Right ventricle myocardium inferior (tissue), 1 donor: ENCODE measurements at regions of chr3 and their contacts with region 1.

Region 1: GRCh38 chr3:49802719-49803464 is at the start of gene INKA1:
- DNase-seq: peak; percentile 95
- ATAC-seq: peak; percentile 84
- total RNA-seq, gene INKA1: 3.1 TPM

Region 2: GRCh38 chr3:49839193-49839809 is 36.4 kb after region 1 on chr3:
- intact Hi-C with region 1: loop called (anchors 1 kb)
- DNase-seq: peak; percentile 89
- ATAC-seq: peak; percentile 85

Region 3: DNA sequence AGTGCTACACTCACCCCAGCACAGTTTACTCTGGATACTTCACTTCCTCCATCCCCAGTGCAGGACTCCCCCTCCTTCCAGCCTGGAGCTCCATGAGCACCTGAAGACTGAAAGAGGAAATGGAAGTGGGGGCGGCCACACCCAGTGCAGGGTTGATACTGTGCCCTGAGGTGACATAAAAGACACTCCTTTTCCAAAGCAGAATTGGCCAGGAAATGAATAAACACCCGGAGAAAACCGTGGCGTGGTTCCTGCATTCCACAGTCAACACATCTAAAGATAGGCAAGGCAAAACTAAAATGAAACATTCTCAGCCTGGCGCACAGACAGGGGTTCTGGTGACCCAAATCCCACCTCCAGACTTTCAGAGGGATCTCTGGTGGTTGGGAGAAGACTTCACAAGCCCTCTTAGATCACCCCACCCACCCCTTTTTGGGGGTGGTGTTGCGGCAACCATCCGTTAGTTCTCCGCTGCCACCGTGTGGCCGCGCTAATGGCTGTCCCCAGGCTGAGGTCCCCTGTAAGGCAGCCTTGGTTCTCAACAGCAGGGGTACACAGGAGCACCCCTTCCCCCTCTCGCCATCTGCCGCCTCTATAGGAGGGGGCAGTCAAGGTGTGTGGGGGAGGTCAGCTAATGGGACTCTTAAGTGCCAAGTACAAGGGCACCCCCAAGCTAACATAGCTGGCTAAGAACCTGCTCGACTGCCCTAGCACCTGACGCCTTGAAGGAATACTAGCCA is 103.3 kb after region 1 on chr3:
- intact Hi-C with region 1: loop called (anchors 1 kb)
- DNase-seq: peak; percentile 74
- ATAC-seq: peak; percentile 57

Region 4: DNA sequence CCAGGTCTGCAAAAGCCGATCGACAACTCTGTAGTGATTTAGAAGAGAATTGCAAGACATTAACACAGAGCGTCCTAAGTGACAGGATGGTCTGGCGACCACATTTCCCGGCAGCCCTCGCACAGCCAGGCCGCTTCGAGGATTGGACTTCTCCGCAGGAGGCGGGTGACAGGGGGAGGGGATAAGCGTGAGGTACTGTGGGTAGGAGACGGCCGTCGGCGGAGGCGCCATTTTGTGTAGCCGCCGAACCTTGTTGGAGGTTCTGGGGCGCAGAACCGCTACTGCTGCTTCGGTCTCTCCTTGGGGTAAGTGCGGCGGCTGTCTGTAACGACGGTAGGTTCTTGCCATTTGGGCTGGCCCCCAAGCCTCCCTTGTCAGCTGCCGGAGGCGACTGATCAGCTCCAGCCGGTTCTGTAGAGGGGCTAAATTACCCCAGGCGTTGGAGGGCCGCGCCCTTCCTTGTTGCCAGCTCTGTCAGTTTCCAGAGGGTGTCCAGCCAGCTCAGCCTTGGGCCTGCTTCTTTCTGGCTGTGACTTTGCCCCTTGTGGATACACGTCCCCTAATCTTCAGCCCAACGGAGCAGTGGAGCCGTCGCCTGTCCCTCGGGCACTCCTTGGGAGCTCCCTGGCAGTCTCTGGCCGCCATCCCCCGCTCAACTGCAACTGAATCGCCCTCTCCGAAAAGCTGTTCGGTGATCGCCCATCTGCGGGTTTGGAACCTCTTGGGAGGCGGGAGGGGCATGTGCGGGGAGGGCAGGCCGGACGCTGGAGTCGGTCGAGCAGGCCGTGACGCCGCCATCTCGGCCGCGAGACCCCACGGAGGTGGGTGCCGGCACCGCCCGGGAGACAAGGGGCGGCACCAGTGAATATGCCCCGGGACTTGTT is 286.1 kb after region 1 on chr3 and contains the start of gene RBM5:
- intact Hi-C with region 1: loop called (anchors 5 kb)
- DNase-seq: peak; percentile 97
- ATAC-seq: peak; percentile 100
- total RNA-seq, gene RBM5: 66.5 TPM